Sigmoid colon (tissue), 7 donors: ENCODE measurements at regions of chr3 and their contacts with region 1.

Region 1: DNA sequence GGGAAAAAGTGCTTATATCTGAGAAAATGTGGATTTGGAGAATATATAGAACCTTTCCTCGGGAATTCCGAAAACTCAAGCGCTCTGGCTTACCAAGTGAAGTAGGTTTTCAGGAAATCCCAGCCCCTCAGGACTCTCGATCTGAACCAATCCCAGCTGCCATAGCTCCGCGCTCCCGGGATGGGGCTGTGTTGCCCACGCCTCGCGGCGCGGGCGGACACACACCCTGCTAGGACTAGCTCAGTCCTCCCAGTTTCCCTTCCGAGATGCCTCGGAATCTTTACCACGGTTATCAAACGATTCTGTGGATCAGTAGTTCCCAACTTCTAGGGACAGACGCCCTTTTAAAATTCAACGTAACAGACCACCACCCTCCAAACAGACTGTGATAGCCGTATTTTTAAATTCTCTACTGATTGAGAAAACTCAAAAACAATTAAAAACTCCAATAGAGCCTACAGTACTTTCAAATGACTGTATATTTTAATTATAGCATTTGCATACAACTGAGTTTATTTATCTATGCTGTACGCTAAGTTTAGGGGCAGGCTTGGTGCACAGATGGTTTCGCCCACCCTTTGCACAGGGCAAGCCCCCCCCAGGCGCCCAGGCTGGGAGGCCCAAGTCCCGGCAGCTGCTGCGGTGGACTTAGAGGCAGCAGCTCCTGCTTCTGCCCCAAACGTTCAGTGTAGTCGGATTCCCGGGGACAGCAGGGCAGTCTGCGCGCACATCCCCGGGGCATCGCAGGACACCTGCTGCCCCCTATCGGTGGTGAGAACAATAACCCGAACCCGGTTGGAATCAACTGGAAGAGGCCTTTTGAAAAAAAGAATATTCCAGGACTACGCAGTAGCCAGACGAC is 52.3 kb downstream of the CCDC54 start:
- DNase-seq: peak; percentile 92
- H3K4me3 ChIP-seq: peak overlapping the region; percentile 73 to 92 (median 81)
- H3K27ac ChIP-seq: peak overlapping the region; percentile 94 to 98 (median 97)
- H3K4me1 ChIP-seq: peaks cover 0 to 11% (median 7%) of the 10 kb centered on the region in 4 donors
- H3K27me3 ChIP-seq: no peaks in the 10 kb centered on the region
- CTCF ChIP-seq: peak; percentile 56 to 92 (median 80)
- EP300 ChIP-seq: no peak
- POLR2A ChIP-seq: no peak

Region 2: GRCh38 chr3:107271787-107272387 is 157.7 kb before region 1 on chr3:
- intact Hi-C with region 1: loop called (anchors 2 kb)
- DNase-seq: no peak
- H3K4me3 ChIP-seq: no peak overlapping the region
- H3K27ac ChIP-seq: no peak overlapping the region
- H3K4me1 ChIP-seq: no peaks in the 10 kb centered on the region
- H3K27me3 ChIP-seq: no peaks in the 10 kb centered on the region
- CTCF ChIP-seq: peak; percentile 35 to 67 (median 57)
- EP300 ChIP-seq: no peak
- POLR2A ChIP-seq: no peak

Region 3: GRCh38 chr3:107392549-107393165 is 36.9 kb before region 1 on chr3:
- intact Hi-C with region 1: no loop called
- DNase-seq: no peak
- H3K4me3 ChIP-seq: no peak overlapping the region
- H3K27ac ChIP-seq: no peak overlapping the region
- H3K4me1 ChIP-seq: no peaks in the 10 kb centered on the region
- H3K27me3 ChIP-seq: no peaks in the 10 kb centered on the region
- CTCF ChIP-seq: no peak
- EP300 ChIP-seq: no peak
- POLR2A ChIP-seq: no peak

Region 4: DNA sequence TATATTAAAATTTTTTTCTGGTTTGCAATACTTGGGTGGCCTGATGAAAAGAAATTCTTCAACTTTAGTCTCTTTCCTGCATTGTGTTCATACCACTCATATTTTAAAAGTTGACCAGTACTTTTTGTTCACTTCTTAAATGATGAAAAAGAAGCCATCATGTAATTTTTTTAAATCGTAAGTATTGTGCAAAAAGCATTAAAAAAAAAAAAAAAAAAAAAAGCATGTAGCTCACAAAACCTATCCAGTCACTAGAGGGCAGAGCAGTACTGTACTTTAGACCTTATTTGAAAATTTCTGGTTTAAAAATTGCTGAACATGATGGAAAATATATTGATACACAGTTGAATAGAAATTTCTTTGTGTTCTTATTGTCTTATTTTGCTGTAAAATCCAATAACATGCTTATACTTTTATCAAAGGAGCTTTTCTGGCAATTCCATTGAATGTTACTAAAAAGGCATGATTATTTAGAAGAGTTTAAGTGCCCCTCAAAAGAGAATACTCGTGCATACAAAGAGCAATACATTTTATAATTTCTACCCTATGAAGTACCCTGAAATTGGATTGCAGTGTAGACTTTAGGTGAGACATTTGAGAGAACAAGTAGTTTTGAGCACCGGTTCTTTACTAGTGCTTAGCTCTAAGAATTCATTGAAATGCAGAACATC is 230.9 kb after region 1 on chr3:
- intact Hi-C with region 1: loop called (anchors 10 kb)
- DNase-seq: no peak
- H3K4me3 ChIP-seq: no peak overlapping the region
- H3K27ac ChIP-seq: no peak overlapping the region
- H3K4me1 ChIP-seq: peaks cover 0 to 42% (median 18%) of the 10 kb centered on the region in 4 donors
- H3K27me3 ChIP-seq: no peaks in the 10 kb centered on the region
- CTCF ChIP-seq: peak; percentile 25 to 50 (median 38)
- EP300 ChIP-seq: no peak
- POLR2A ChIP-seq: no peak

Region 5: GRCh38 chr3:108221911-108222852 is 792.6 kb after region 1 on chr3 and contains the start of gene IFT57:
- intact Hi-C with region 1: loop called (anchors 10 kb)
- DNase-seq: peak; percentile 99
- H3K4me3 ChIP-seq: peak within 1 kb of the TSS; percentile 78 to 86 (median 82)
- H3K27ac ChIP-seq: peak within 1 kb of the TSS; percentile 80 to 84 (median 82)
- H3K4me1 ChIP-seq: peaks cover 0 to 33% (median 19%) of the 10 kb centered on the region in 4 donors
- H3K27me3 ChIP-seq: no peaks in the 10 kb centered on the region
- CTCF ChIP-seq: no peak
- EP300 ChIP-seq: no peak
- POLR2A ChIP-seq: peak; percentile 26 to 57
- total RNA-seq, gene IFT57: 38.8 to 49.6 (median 44.0) TPM